Cardiac septum (tissue), 1 donor: ENCODE measurements at regions of chr2 and their contacts with region 1.

Region 1: DNA sequence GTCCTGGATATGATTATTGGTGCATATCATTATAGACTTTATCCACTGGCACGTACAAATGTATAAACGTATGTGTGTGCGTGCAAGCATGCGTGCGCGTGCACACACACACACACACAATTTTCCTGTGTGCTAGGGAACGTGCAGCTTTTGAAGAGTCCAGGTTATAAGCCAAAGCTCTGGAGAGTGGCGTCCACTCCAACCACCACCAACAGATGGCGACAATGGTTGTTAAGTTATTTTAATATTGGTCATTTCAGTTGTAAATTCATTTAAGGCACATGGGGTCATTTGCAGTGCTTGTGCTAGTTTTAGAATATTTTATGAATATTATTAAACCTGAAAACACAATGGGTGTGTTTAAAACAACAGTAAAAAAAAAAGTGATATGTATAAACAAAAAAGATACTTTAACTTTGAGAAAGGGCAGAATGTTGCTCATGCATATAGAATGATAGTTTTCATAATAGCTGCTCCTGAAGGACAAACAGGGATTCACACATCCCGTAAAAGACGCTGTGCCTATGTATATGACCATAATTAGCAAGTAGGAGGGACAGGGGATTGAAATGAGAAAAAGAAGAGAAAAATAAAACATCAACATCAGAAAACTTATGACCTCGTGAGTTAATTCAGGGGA is 124.2 kb upstream of the ITGB6 start:
- DNase-seq: no peak

Region 2: GRCh38 chr2:160621748-160622147 is 297.5 kb after region 1 on chr2:
- intact Hi-C with region 1: no loop called
- DNase-seq: no peak

Region 3: DNA sequence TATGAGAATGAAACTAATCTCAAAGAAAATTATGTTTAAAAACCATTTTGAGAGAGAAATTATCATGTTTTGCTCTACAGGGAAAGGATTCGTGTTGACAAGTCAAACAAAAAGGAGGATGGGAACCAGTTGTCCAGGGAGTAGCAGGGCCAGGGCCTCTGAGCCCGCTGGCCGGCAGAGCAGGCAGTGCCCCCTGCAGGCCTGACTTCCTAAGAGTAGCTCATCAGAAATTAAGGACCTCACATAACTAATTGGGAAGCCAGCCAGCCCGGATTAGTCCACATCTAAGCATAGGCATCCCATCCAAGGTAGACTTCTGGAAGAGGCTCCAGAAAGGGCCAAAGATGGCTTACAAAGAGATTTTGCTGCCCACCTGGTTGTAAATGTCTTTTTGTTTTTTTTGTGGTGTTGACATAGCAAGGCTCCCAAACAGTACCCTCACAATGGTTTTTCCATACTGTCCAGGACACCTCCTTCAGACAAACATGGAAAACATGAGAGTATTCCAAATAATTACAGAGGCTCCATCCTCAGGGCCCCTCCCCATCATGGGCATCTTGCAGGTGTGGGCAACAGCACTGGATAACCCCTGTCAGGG is 594.7 kb after region 1 on chr2:
- intact Hi-C with region 1: loop called (anchors 5 kb)
- DNase-seq: peak; percentile 82

Region 4: DNA sequence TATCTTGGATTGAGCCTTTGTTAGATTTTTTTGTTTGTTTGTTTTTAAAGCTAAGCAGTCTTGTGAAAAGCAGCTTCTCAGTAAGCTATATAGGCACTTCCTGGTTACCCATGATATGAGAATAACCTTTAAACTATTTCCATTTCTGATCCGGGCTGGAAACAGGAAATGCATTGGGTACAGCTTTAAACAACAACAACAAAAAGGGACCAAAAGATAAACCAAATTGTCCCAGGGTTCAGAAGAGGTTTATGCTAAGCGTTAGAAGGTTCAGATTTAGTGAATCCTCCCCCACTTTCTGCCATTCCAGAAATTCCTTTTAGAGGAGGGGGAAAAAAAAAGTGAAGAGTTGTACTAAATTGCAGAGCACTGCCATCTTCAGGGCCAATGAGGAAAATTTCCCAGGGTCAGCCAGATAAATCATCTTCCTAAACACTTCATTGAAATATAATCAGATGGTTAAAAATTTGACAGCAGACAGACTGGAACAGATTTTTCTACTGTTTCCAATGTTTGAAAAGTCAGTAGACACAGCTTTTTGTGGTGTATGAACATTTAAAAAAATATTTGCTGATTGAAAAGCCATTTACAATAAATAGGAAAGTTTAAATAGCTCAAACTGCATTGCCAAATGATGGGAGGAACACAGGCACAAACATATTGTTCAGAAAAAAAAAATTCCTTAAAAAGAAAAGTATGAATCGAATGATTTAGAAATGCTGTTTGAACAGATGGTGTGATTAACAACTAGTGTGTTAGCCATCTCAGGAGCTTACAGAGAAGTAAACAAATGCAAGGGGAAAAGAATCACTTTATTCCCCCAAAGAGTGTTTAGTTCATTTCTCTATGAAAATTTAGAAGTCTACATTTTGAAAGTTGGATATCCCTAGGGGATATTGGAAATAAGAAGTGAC is 646.0 kb after region 1 on chr2:
- intact Hi-C with region 1: loop called (anchors 5 kb)
- DNase-seq: no peak

Region 5: GRCh38 chr2:160994141-160995002 is 670.1 kb after region 1 on chr2:
- intact Hi-C with region 1: loop called (anchors 5 kb)
- DNase-seq: no peak